ENCODE measurements at regions of chr11 and their contacts with region 1.

Region 1: GRCh38 chr11:6315811-6316425 is 4.4 kb downstream of the CAVIN3 start:
- DNase-seq: peak; percentile 49 to 63 (median 54)
- ATAC-seq: peak; percentile 47
- H3K4me3 ChIP-seq: no peak overlapping the region
- H3K4me1 ChIP-seq: peaks cover 6% of the 10 kb centered on the region
- CTCF ChIP-seq: peak; percentile 68

Region 2: GRCh38 chr11:6249784-6250555 is 65.9 kb before region 1 on chr11:
- intact Hi-C with region 1: loop called in 1 of 2 experiments (anchors 10 kb)
- DNase-seq: peak in 2 of 3 donors; percentile 66 to 70
- ATAC-seq: peak; percentile 74
- H3K4me3 ChIP-seq: no peak overlapping the region
- H3K4me1 ChIP-seq: no peaks in the 10 kb centered on the region
- CTCF ChIP-seq: no peak